Cardiac septum (tissue), 1 donor: ENCODE measurements at regions of chr14 and their contacts with region 1.

Region 1: DNA sequence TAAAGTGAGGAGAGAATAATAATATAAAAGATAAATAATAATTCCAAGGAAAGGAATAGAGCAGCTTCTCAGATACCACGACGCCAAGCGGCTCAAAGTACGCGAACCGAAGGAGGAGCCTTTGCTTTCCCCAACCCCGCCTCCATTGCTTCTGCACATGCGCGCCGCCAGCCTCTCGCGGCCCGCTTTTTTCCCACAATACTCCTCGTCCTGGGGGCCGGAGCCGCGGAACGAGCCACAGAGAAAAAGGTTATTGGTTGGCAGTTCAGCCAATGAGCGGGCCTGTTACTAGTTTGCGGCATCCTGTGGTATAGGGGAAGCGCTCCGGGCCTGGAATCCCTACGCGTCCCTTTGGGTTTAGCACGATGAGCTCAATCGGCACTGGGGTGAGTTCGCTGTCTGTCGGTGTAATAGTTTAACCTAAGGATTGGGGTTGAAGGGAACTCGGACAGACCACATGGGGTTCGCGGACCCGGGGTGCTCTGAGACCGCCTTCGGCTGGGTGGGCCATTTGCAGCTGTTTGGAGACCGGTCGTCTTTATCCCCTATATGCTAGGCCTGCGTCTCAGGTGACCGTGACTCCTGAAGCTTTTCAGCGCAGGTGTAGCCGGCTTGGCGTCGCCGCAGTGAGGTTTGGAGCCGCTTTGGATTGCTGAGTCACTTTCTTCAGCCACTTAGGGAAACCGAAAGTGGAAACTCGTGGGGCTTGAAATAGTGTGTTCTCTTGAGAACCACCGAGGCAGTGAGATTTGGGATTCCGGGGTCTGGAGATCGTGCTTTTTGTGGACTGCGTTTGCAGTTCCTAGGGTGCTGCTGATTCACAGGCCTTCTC is at the start of gene PSMA3:
- DNase-seq: peak; percentile 99
- total RNA-seq, gene PSMA3: 118 TPM

Region 2: GRCh38 chr14:58166005-58166983 is 78.5 kb before region 1 on chr14:
- intact Hi-C with region 1: no loop called
- DNase-seq: peak; percentile 89

Region 3: DNA sequence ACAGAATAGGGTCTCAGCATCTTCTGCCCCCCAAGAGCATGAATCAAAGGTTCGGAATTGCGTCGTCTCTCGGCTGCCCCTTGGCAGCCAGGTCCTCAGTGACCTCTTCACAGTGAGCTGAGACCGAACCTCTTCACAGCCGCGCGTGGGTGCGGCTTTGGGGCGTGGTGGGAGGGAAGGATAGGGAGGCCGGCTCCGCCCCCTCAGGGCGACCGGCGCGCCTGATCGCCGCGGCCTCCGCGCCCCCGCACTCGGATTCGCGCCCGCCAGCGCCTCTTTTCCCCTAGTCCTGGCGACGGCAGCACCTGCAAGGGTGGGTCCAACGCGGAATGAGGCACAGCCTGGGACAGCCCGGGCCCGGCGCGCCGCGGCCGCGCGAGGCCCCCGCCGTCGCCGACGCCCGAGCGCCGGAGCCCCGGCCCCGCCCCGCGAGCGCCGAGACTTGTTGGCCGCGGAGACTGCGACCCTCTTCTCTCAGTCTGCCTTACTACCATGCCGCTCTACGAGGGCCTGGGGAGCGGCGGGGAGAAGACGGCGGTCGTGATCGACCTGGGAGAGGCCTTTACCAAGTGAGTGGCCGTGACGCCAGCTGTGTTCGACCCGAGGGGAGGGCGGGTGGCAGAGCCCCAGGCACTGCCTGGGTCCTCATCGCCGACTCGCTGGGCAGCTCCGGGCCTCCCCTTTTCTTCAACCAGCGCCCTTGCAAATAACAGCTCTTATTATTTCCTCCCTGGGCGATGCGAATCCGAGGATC is 44.9 kb before region 1 on chr14 and contains the start of gene ACTR10:
- intact Hi-C with region 1: loop called (anchors 5 kb)
- DNase-seq: peak; percentile 95
- total RNA-seq, gene ACTR10: 68.5 TPM

Region 4: DNA sequence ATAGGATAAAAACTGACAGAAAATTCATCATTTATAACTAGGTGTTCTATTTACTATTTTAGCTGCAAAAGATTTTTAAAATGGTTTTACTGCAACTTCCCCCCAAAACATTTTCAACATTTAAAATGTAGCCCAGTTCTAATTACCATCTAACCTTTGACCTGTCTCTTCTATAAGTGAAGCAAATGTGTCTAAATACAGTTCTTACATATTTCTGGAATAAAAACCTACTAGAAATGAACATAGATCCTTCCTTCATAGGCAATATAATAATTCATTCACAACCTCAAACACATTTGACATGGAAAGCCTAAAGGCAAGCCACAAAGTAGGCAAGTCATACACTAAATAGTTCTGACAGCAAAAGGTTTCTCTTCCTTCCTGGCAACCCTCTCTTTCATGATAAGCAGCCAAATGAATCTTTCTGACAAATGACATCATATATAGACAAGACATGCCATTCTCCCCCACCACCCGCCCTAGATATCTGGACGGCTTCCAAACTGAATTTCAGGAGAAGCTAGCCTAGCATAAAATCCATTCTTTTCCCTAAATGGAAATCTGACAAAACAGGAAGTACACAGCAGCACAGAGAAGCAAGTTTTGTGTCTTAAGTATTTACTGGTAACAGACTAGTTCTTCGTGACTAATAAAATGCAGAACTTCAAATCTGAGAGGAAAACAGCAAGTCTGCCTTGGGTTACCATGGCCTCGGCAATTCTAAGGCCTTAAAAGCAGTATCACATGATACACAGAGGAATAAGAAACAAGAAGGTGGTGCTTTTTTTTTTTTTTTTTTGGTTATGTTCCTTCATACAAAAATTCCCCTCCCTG is 36.4 kb after region 1 on chr14:
- intact Hi-C with region 1: loop called (anchors 5 kb)
- DNase-seq: no peak

Region 5: GRCh38 chr14:58297762-58298476 is 53.1 kb after region 1 on chr14:
- intact Hi-C with region 1: loop called (anchors 1 kb)
- DNase-seq: peak; percentile 99

Region 6: GRCh38 chr14:58637391-58638230 is 392.8 kb after region 1 on chr14 and contains the start of gene DACT1:
- intact Hi-C with region 1: no loop called
- DNase-seq: peak; percentile 82
- total RNA-seq, gene DACT1: 3.2 TPM